Caco-2 (cell line): ENCODE measurements at regions of chr3 and their contacts with region 1.

Region 1: DNA sequence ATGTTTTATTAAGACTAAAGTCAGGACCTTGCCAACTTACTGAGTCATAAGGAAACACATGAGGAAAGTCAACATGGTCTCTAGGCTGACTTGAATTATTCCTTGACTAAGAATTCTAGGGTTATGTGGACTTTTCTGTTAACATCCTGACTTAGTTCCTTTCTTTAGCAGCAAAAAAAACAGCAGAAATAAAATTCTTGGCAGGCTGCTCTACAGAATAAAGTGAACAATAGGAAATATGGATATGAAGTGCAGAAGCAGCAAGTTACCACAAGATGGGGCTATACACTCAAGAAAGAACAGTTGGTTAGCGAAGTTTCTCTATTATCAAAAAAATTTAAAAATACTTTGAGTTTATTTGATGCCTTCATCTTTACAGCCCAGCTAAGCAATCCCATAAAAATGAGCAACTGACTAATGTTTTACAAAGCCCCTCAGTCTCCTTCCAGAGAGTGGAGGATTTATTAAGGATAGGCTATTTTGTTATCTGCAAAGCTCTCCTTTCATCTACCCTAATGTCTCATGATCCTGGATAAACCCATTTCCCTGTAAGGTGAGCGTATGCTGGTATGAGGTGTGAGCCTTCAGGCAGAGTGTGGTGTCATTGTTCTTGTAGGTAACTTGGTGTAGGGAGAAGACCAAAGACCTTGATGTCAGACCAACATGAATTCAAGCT is 23.1 kb upstream of the MCCC1 start:
- DNase-seq: peak in 1 of 2 experiments; percentile 22
- H3K4me3 ChIP-seq: no peak overlapping the region
- H3K4me3 Mint-ChIP-seq: no peak overlapping the region
- H3K27ac Mint-ChIP-seq: no peak overlapping the region
- H3K4me1 ChIP-seq: peaks cover 5% of the 10 kb centered on the region; the same call in 1 of the 2 replicates
- H3K4me1 Mint-ChIP-seq: no peaks in the 10 kb centered on the region
- H3K27me3 ChIP-seq: no peaks in the 10 kb centered on the region
- H3K27me3 Mint-ChIP-seq: peaks cover 2% of the 10 kb centered on the region
- CTCF ChIP-seq: peak; percentile 59 to 78

Region 2: GRCh38 chr3:182713743-182714517 is 408.5 kb before region 1 on chr3:
- CTCF ChIA-PET with region 1: no interaction called
- POLR2A ChIA-PET with region 1: no interaction called
- intact Hi-C with region 1: no loop called
- DNase-seq: peak in 1 of 2 experiments; percentile 65
- H3K4me3 ChIP-seq: no peak overlapping the region
- H3K4me3 Mint-ChIP-seq: no peak overlapping the region
- H3K27ac Mint-ChIP-seq: no peak overlapping the region
- H3K4me1 ChIP-seq: peaks cover 38% of the 10 kb centered on the region
- H3K4me1 Mint-ChIP-seq: peaks cover 28% of the 10 kb centered on the region
- H3K27me3 ChIP-seq: no peaks in the 10 kb centered on the region
- H3K27me3 Mint-ChIP-seq: no peaks in the 10 kb centered on the region
- CTCF ChIP-seq: peak; percentile 63 to 71

Region 3: DNA sequence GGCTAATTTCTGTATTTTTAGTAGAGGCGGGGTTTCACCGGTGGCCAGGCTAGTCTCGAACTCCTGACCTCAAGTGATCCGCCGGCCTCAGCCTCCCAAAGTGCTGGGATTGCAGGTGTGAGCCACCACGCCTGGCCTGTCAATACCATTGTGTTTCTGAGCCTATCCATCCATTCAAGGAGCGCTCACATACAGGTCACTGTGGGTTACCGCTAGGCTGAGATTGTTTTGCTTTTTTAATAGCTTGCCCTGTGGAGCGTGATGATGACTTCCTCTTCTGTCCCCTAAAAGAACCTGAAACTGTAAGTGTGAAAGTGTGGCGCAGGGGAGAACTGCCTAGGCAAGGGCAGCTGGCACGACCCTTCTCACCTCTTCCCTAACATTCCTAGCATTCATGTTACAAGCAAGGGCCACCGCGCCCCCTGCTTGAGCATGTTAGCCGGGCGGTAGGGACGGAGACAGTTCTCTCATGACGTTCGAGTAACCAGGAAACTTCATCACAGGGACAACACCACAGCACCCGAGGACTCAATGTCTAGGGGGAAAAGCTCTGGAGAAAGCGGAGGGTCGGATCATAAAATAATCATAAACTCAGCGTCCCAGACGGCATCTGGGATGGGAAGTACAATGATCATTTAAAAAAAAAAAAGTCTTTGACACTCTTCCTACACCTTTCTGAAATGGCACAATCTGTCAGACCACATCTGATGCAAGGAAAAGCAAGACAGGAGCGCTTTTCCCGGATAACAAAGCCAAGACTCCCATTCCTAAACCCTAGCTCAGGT is 39.3 kb after region 1 on chr3:
- CTCF ChIA-PET with region 1: no interaction called
- POLR2A ChIA-PET with region 1: no interaction called
- intact Hi-C with region 1: loop called (anchors 5 kb)
- DNase-seq: peak; percentile 46 to 55
- H3K4me3 ChIP-seq: peak overlapping the region; percentile 57
- H3K4me3 Mint-ChIP-seq: peak overlapping the region; percentile 94
- H3K27ac Mint-ChIP-seq: peak overlapping the region; percentile 84
- H3K4me1 ChIP-seq: peaks cover 9% of the 10 kb centered on the region
- H3K4me1 Mint-ChIP-seq: peaks cover 9% of the 10 kb centered on the region
- H3K27me3 ChIP-seq: no peaks in the 10 kb centered on the region
- H3K27me3 Mint-ChIP-seq: no peaks in the 10 kb centered on the region
- CTCF ChIP-seq: peak in 1 of 2 experiments; percentile 18

Region 4: GRCh38 chr3:183178629-183179549 is 56.5 kb after region 1 on chr3:
- CTCF ChIA-PET with region 1: interaction called, 18 read pairs
- POLR2A ChIA-PET with region 1: no interaction called
- intact Hi-C with region 1: loop called (anchors 1 kb)
- DNase-seq: peak; percentile 55 to 68
- H3K4me3 ChIP-seq: peak overlapping the region; percentile 40
- H3K4me3 Mint-ChIP-seq: peak overlapping the region; percentile 74
- H3K27ac Mint-ChIP-seq: no peak overlapping the region
- H3K4me1 ChIP-seq: no peaks in the 10 kb centered on the region
- H3K4me1 Mint-ChIP-seq: no peaks in the 10 kb centered on the region
- H3K27me3 ChIP-seq: no peaks in the 10 kb centered on the region; the same call in 1 of the 2 replicates
- H3K27me3 Mint-ChIP-seq: peaks cover 7% of the 10 kb centered on the region
- CTCF ChIP-seq: peak in 1 of 2 experiments; percentile 48

Region 5: GRCh38 chr3:183212565-183212964 is 90.2 kb after region 1 on chr3:
- CTCF ChIA-PET with region 1: no interaction called
- POLR2A ChIA-PET with region 1: no interaction called
- intact Hi-C with region 1: no loop called
- DNase-seq: no peak
- H3K4me3 ChIP-seq: no peak overlapping the region
- H3K4me3 Mint-ChIP-seq: no peak overlapping the region
- H3K27ac Mint-ChIP-seq: no peak overlapping the region
- H3K4me1 ChIP-seq: 0 out of 2 replicates have a peak, but pooled peaks cover 4% of the 10 kb centered on the region
- H3K4me1 Mint-ChIP-seq: peaks cover 5% of the 10 kb centered on the region
- H3K27me3 ChIP-seq: no peaks in the 10 kb centered on the region
- H3K27me3 Mint-ChIP-seq: no peaks in the 10 kb centered on the region
- CTCF ChIP-seq: no peak